Heart left ventricle (tissue), 16 donors: ENCODE measurements at regions of chr5 and their contacts with region 1.

Region 1: DNA sequence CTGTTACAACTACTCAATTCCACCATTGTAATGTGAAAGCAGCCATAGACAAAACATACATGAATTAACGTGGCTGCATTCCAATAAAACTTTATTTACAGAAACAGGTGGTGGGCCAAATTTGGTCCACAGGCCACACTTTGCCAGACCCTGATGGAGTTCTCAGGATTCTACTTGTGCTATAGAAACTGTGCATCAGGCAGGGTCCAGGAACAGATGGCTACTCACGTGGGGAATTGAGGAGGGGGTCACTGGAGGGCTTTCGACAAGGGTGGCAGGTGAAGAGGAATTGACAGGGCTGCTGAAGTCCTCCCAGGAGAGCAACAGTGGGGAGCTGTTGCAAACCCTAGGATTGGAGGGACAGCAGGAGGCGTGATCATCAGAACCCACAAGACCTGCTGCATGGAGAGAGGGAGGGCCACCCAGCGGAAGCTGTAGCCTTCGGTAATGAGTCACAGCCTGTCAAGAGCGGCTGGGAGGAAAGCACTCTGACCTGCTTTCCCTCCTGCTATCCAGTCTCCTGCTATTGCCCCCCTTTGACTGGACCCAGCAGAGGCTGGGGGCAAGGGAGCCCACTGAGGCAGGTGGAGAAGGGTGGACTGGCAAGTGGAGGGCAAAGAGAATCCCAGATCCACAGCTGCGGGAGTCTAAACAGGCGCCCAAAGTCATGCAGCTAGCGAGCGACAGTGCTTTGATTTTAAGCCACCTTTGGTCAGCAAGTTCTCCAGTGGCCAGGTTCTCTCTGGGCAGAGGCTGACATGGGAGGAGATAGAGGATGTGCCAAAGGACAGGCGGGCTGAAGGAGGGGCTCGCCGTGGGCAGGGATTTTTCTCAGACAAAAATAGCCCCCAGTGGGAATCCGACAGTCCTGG is 138.3 kb upstream of the SMIM23 start:
- DNase-seq: peak in 2 of 5 donors; percentile 31 to 48
- ATAC-seq: peak; percentile 57 to 81 (median 73)
- H3K4me3 ChIP-seq: no peak overlapping the region
- H3K27ac ChIP-seq: peak overlapping the region in 7 of 12 donors; percentile 13 to 65 (median 54)
- H3K4me1 ChIP-seq: peaks cover 0 to 8% (median 0%) of the 10 kb centered on the region in 12 donors
- H3K27me3 ChIP-seq: no peaks in the 10 kb centered on the region
- CTCF ChIP-seq: no peak
- POLR2A ChIP-seq: no peak

Region 2: GRCh38 chr5:171743436-171744076 is 96.3 kb after region 1 on chr5:
- intact Hi-C with region 1: loop called in 1 of 10 experiments (anchors 10 kb)
- DNase-seq: no peak
- ATAC-seq: no peak
- H3K4me3 ChIP-seq: no peak overlapping the region
- H3K27ac ChIP-seq: no peak overlapping the region
- H3K4me1 ChIP-seq: peaks cover 0 to 17% (median 0%) of the 10 kb centered on the region in 12 donors
- H3K27me3 ChIP-seq: no peaks in the 10 kb centered on the region
- CTCF ChIP-seq: no peak
- POLR2A ChIP-seq: no peak

Region 3: DNA sequence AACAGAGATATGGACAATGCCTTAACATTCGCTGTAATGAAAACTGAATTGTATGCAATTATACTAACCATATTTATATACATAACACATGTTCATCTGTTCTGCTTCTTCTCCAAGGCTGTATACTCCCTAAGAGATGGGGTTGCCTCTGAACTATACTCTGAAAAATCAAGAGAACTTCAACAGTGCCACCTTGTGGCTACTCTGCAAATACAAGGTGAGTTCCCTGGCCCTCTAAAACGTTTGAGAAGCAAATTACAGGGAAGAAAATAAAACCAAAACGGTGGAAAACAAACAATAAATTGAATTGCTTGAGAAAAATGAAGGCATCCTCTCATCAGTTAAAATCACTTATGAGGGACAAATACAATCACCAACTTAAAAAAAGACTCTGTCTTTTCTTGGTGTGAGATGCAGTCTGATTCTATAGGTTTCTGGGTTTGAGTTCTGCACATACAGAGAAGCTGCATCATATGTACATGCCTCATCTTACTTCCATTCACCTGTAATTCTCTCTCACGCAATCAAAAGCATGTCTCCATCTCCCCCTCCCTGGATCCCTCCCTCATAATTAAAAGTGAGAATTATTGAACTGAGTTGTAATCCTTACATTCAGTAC is 260.6 kb after region 1 on chr5:
- intact Hi-C with region 1: loop called in 1 of 10 experiments (anchors 10 kb)
- DNase-seq: peak in 3 of 5 donors; percentile 30 to 49 (median 40)
- ATAC-seq: peak; percentile 49 to 85 (median 79)
- H3K4me3 ChIP-seq: no peak overlapping the region
- H3K27ac ChIP-seq: no peak overlapping the region
- H3K4me1 ChIP-seq: peaks cover 0 to 44% (median 27%) of the 10 kb centered on the region in 12 donors
- H3K27me3 ChIP-seq: no peaks in the 10 kb centered on the region
- CTCF ChIP-seq: peak; percentile 68 to 87 (median 78)
- POLR2A ChIP-seq: no peak